PC-9 (cell line): ENCODE measurements at regions of chr9 and their contacts with region 1.

Region 1: DNA sequence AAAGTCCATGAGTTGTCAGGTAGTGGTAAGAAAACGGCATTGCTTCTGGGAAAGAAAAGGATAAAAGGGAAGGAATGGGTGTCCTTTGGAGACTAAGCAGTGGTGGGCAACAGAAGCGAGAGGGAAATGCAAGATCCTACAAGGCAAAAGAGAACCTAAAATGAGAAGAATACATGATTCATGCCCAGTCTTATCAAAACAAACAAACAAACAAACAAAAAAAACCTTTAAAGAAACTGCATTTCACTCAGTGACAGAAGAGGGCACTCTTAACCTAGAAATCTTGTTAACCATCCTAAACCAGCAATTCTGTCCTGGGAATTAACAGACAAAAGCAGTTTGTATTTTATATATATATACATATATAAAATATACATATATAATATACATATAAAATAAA is 88.5 kb downstream of the SUSD1 start:
- DNase-seq: peak in 1 of 2 experiments; percentile 39
- H3K4me3 ChIP-seq: no peak overlapping the region
- H3K27ac ChIP-seq: no peak overlapping the region
- H3K4me1 ChIP-seq: 0 out of 2 replicates have a peak, but pooled peaks cover 4% of the 10 kb centered on the region
- H3K27me3 ChIP-seq: no peaks in the 10 kb centered on the region
- CTCF ChIP-seq: peak; percentile 73

Region 2: GRCh38 chr9:111631071-111631971 is 455.3 kb before region 1 on chr9 and contains the start of gene DNAJC25:
- CTCF ChIA-PET with region 1: no interaction called
- POLR2A ChIA-PET with region 1: interaction called, 22 read pairs
- intact Hi-C with region 1: no loop called
- DNase-seq: peak; percentile 97 to 99
- H3K4me3 ChIP-seq: peak within 1 kb of the TSS; percentile 73
- H3K27ac ChIP-seq: peak within 1 kb of the TSS; percentile 63
- H3K4me1 ChIP-seq: peaks cover 23% of the 10 kb centered on the region
- H3K27me3 ChIP-seq: no peaks in the 10 kb centered on the region
- CTCF ChIP-seq: no peak
- total RNA-seq, gene DNAJC25: 7.3 and 7.9 TPM in 2 replicates

Region 3: GRCh38 chr9:111937781-111938426 is 148.7 kb before region 1 on chr9:
- CTCF ChIA-PET with region 1: no interaction called
- POLR2A ChIA-PET with region 1: no interaction called
- intact Hi-C with region 1: no loop called
- DNase-seq: no peak
- H3K4me3 ChIP-seq: no peak overlapping the region
- H3K27ac ChIP-seq: no peak overlapping the region
- H3K4me1 ChIP-seq: no peaks in the 10 kb centered on the region
- H3K27me3 ChIP-seq: no peaks in the 10 kb centered on the region
- CTCF ChIP-seq: no peak

Region 4: DNA sequence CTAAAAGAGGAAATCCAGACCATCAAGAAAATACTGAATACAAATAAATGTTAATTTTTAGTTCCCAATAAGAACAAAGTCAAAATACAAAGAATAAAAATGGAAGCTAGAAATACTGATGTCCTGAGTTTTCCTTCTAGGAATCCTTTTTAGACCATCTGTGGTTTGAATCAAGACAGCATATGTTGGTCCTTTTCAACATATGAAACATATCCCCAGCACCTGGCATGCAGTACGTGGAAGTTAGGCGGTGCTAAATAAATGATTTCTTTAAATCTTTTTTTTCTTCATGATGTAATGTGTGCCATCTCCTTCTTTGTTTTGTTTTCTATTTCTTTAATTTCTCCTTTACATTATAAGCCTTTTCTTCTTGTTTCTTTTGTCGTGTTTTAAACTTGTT is 434.0 kb after region 1 on chr9:
- CTCF ChIA-PET with region 1: no interaction called
- POLR2A ChIA-PET with region 1: no interaction called
- intact Hi-C with region 1: no loop called
- DNase-seq: no peak
- H3K4me3 ChIP-seq: no peak overlapping the region
- H3K27ac ChIP-seq: no peak overlapping the region
- H3K4me1 ChIP-seq: no peaks in the 10 kb centered on the region
- H3K27me3 ChIP-seq: no peaks in the 10 kb centered on the region
- CTCF ChIP-seq: no peak